Activated CD4-positive, alpha-beta T cell treated with anti-CD3 and anti-CD28 coated beads, Interleukin-2, amount 10 ng/mL, durations not matched to agents 7 days and 5 days (primary cell): ENCODE measurements at regions of chr11 and their contacts with region 1.

Region 1: DNA sequence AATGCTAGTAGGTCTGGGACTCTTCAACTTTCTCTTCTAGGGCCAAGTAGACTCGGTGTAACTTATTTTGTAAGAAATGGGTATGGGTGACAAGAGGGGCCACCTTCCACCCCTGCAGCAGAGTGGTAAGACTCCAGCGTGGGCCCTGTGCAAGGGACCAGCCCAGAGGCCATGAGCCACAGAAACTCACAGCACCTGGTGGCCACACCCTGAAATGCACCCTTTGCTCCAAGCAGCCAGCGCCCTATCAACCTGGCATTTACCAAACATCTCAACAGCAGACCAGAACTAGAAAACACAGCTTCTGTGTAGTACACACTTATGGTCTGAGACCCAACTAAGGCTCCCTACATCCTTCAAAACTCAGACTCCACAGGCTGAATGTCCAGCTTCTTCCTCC is 5.7 kb downstream of the CDCA5 start:
- DNase-seq: peak; percentile 81
- H3K4me3 Mint-ChIP-seq: no peak overlapping the region
- H3K27ac Mint-ChIP-seq: peak overlapping the region; percentile 91
- H3K4me1 Mint-ChIP-seq: peaks cover 52% of the 10 kb centered on the region
- H3K27me3 Mint-ChIP-seq: no peaks in the 10 kb centered on the region

Region 2: GRCh38 chr11:65063532-65063931 is 14.6 kb before region 1 on chr11:
- CTCF ChIA-PET with region 1: interaction called, 12 read pairs
- POLR2A ChIA-PET with region 1: no interaction called
- DNase-seq: no peak
- H3K4me3 Mint-ChIP-seq: no peak overlapping the region
- H3K27ac Mint-ChIP-seq: no peak overlapping the region
- H3K4me1 Mint-ChIP-seq: peaks cover 13% of the 10 kb centered on the region
- H3K27me3 Mint-ChIP-seq: no peaks in the 10 kb centered on the region